Activated T-helper 1 cell treated with anti-CD3 and anti-CD28 coated beads, Interleukin-12 subunit alpha, Interleukin-12 subunit beta, Interleukin-2, Interleukin-4 antibody, amounts not matched to agents 30 ng/mL and 10 ng/mL and 1 ng/mL, durations not matched to agents 14 hours and 24 hours and 36 hours (primary cell): ENCODE measurements at regions of chr19 and their contacts with region 1.

Region 1: DNA sequence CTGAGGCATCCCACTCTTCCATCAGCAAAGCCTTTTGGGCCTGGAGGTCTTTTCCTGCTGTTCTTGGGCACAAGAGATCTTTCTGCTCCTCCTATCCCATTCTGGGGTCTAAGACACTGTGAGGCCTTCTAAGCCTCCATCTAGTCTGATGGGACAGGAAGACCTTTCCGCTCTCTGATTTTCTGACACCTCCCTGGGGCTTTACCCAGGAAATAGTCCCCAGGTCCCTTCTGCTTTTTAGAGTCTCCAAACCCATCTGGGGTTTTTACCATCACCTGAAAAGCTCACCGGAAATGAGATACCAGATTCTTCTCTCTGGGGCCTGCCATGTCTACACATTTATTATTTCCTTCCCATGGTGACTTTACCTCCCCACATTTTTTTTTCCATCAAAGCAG is 21.1 kb downstream of the CLEC17A start:
- DNase-seq: no peak
- H3K4me3 Mint-ChIP-seq: no peak overlapping the region
- H3K27ac Mint-ChIP-seq: no peak overlapping the region
- H3K4me1 Mint-ChIP-seq: no peaks in the 10 kb centered on the region
- H3K27me3 Mint-ChIP-seq: no peaks in the 10 kb centered on the region

Region 2: GRCh38 chr19:14614099-14614412 is 10.1 kb after region 1 on chr19:
- intact Hi-C with region 1: loop called (anchors 1 kb)
- DNase-seq: no peak
- H3K4me3 Mint-ChIP-seq: no peak overlapping the region
- H3K27ac Mint-ChIP-seq: no peak overlapping the region
- H3K4me1 Mint-ChIP-seq: no peaks in the 10 kb centered on the region
- H3K27me3 Mint-ChIP-seq: no peaks in the 10 kb centered on the region